Dendritic cell treated with granulocyte-macrophage colony-stimulating factor and Interleukin-4, amounts not matched to agents 40 ng/mL and 50 ng/mL, for 4 days (primary cell): ENCODE measurements at regions of chr19 and their contacts with region 1.

Region 1: DNA sequence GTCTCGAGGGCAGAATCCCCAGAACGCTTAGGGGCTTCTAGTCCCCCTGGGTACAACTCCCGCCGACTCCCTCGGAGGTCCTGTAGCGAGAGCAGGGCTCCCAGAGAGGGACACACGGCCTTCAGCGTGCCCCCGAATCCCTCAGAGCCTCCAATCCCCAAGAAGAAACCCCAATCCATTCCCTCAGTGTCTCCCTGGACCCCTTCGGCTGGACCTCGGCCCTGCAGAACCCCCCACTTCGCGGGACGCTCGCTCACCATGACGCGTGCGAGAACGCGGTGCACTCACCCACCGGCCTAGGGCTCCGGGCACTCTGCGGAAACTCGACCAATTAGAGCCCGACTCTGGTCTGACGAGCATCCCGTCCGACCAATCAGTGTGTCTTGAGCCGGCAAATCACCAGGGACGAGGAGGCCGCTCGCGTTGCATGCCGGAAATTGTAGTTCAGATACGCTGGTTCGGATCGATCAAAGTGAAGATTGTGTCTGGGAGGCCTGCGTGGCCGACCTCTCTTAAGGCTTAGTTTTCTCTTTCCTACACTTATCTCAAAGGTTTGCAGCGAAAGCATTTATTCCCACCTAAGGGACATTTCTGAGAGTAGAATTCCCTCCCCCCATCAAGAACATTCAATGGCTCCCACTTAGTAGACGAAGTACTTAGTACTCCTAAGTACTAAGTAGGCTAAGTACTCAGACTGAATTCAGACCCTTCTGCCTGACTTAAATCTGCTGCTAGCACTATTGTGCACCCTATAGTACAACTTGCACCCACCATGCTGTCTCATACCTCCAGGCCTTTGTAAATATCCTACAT is at the start of gene TMEM161A:
- H3K4me3 Mint-ChIP-seq: peak within 1 kb of the TSS; percentile 99
- H3K27ac Mint-ChIP-seq: peak within 1 kb of the TSS; percentile 97
- H3K4me1 Mint-ChIP-seq: peaks cover 32% of the 10 kb centered on the region
- H3K27me3 Mint-ChIP-seq: peaks cover 10% of the 10 kb centered on the region

Region 2: GRCh38 chr19:18789883-18790565 is 348.4 kb before region 1 on chr19:
- intact Hi-C with region 1: no loop called
- H3K4me3 Mint-ChIP-seq: peak overlapping the region; percentile 67
- H3K27ac Mint-ChIP-seq: no peak overlapping the region
- H3K4me1 Mint-ChIP-seq: peaks cover 50% of the 10 kb centered on the region
- H3K27me3 Mint-ChIP-seq: peaks cover 91% of the 10 kb centered on the region

Region 3: GRCh38 chr19:19063183-19064097 is 74.9 kb before region 1 on chr19 and contains the start of gene SLC25A42:
- intact Hi-C with region 1: loop called (anchors 2 kb)
- H3K4me3 Mint-ChIP-seq: peak within 1 kb of the TSS; percentile 70
- H3K27ac Mint-ChIP-seq: peak within 1 kb of the TSS; percentile 38
- H3K4me1 Mint-ChIP-seq: peaks cover 22% of the 10 kb centered on the region
- H3K27me3 Mint-ChIP-seq: peaks cover 6% of the 10 kb centered on the region

Region 4: GRCh38 chr19:19203012-19203856 is 64.9 kb after region 1 on chr19 and contains the start of gene NR2C2AP:
- intact Hi-C with region 1: no loop called
- H3K4me3 Mint-ChIP-seq: peak within 1 kb of the TSS; percentile 83
- H3K27ac Mint-ChIP-seq: peak within 1 kb of the TSS; percentile 88
- H3K4me1 Mint-ChIP-seq: peaks cover 40% of the 10 kb centered on the region
- H3K27me3 Mint-ChIP-seq: peaks cover 20% of the 10 kb centered on the region